HepG2 (cell line): ENCODE measurements at regions of chr1 and their contacts with region 1.

Region 1: DNA sequence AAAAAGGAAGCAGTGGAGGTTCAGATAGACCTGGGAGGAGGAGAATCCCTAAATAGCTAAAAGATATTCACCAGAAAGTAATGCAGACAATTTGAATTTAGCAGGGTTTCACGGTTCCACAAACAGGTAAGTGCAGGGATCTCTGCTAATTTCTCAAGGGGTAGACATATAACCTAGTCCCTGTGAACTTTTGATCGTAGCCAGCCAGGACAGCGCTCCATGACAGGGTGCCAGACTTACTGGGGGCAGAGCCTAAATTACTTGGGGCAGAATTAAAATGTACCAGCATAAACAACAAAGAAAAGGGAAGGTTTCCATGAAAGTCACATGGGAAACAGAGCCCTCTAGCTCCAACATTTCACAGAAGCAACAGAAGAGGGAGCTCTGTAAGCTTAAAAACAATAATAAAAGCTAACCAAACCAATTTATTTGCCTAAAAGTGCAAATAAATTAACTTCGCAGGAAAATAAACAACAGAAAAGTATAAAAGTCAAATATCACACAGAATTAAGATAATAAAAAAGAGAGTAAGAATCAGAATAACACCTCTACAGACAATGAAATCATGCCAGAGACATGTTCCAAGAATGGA is 198.3 kb downstream of the DUSP10 start:
- DNase-seq: no peak
- ATAC-seq: no peak; the same call in 2 of the 3 replicates
- H3K4me3 ChIP-seq: no peak overlapping the region
- H3K27ac ChIP-seq: no peak overlapping the region
- H3K4me1 ChIP-seq: no peaks in the 10 kb centered on the region
- H3K27me3 ChIP-seq: no peaks in the 10 kb centered on the region
- CTCF ChIP-seq: peak; percentile 29; the same call in 1 of the 2 replicates
- EP300 ChIP-seq: no peak
- POLR2A ChIP-seq: no peak
- RAD21 ChIP-seq: no peak

Region 2: DNA sequence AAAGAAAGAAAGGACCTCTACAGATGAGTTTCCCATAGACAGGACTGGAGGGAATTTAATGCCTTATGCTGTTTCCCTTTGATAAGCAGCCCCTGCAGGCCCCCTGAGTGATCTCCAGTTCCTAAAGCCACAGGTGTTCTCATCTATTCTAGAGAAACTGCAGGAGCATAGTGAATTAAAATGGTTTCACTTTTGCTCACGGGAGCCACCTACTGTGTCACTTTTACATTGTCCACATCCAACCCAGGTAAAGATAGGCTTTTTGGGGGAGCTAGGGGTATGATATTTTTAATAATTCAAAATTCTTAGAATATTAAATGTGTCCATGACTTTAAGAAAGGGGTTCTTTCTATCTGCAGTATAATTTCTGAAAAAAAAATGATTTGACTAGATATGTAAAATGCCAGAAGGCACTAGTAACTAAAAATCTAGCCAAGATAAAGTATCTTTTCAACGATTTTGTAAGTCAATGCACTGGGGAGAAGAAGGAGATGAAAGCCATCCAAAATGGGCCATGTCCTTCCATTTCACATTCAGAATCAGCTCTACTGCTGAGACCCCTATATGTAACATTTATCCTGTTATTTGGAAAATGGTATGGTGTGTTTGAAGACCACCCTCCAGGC is 465.6 kb after region 1 on chr1:
- CTCF ChIA-PET with region 1: no interaction called
- POLR2A ChIA-PET with region 1: no interaction called
- in situ Hi-C with region 1: loop called (anchors 10 kb)
- intact Hi-C with region 1: loop called (anchors 1 kb)
- DNase-seq: peak; percentile 16
- ATAC-seq: peak; percentile 80
- H3K4me3 ChIP-seq: no peak overlapping the region
- H3K27ac ChIP-seq: no peak overlapping the region
- H3K4me1 ChIP-seq: no peaks in the 10 kb centered on the region
- H3K27me3 ChIP-seq: no peaks in the 10 kb centered on the region
- CTCF ChIP-seq: peak; percentile 48
- EP300 ChIP-seq: no peak
- POLR2A ChIP-seq: no peak
- RAD21 ChIP-seq: no peak